ENCODE measurements at regions of chr11 and their contacts with region 1.

Region 1: GRCh38 chr11:130924770-130925169 is 8.5 kb upstream of the SNX19 start:
- DNase-seq: no peak
- H3K4me3 ChIP-seq: no peak overlapping the region
- H3K27ac ChIP-seq: no peak overlapping the region
- H3K4me1 ChIP-seq: no peaks in the 10 kb centered on the region
- H3K27me3 ChIP-seq: no peaks in the 10 kb centered on the region
- CTCF ChIP-seq: no peak

Region 2: GRCh38 chr11:130882138-130882551 is 42.6 kb before region 1 on chr11:
- intact Hi-C with region 1: no loop called
- DNase-seq: no peak
- H3K4me3 ChIP-seq: no peak overlapping the region
- H3K27ac ChIP-seq: no peak overlapping the region
- H3K4me1 ChIP-seq: no peaks in the 10 kb centered on the region
- H3K27me3 ChIP-seq: no peaks in the 10 kb centered on the region
- CTCF ChIP-seq: no peak

Region 3: DNA sequence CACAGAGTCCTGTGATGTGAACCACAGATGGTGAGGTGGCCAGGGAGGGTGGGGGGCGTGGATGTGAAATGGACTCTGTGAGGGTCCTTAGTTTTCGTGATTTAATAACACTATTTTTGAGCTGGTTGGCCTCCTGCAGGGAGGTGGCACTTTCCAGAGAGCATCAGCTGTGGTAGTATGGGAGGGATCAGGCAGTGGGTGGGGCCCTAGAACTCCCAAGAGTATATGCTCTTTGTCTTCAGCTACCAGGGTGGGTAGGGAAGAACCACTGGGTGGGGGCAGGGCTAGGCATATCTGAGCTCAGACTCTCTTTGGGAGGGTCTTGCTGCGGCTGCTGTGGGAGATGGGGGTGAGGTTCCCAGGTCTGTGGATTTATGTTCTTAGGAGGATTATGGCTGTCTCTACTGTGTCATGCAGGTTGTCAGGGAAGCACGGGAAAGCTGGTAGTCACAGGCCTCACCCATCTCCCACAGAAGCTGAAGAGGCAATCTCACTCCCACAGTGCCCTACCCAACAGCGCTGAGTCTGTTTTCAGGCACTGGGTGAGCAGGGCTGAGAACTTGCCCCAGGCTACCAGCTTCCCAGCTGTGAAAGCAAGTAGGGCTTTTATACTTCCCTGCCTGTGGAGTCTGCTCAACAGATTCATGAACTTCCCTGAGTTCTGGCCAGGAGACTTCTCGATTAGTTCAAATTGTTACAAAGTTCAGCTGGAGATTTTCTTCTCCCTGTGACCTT is 39.5 kb after region 1 on chr11:
- intact Hi-C with region 1: no loop called
- DNase-seq: peak in 1 of 5 donors; percentile 29
- H3K4me3 ChIP-seq: no peak overlapping the region
- H3K27ac ChIP-seq: no peak overlapping the region
- H3K4me1 ChIP-seq: no peaks in the 10 kb centered on the region
- H3K27me3 ChIP-seq: no peaks in the 10 kb centered on the region
- CTCF ChIP-seq: no peak

Region 4: GRCh38 chr11:131077340-131077739 is 152.6 kb after region 1 on chr11:
- intact Hi-C with region 1: no loop called
- DNase-seq: no peak
- H3K4me3 ChIP-seq: no peak overlapping the region
- H3K27ac ChIP-seq: no peak overlapping the region
- H3K4me1 ChIP-seq: no peaks in the 10 kb centered on the region
- H3K27me3 ChIP-seq: no peaks in the 10 kb centered on the region
- CTCF ChIP-seq: no peak

Region 5: GRCh38 chr11:131674051-131674755 is 749.4 kb after region 1 on chr11:
- intact Hi-C with region 1: loop called (anchors 10 kb)
- DNase-seq: peak in 4 of 5 donors; percentile 86 to 90 (median 87)
- H3K4me3 ChIP-seq: no peak overlapping the region
- H3K27ac ChIP-seq: no peak overlapping the region
- H3K4me1 ChIP-seq: no peaks in the 10 kb centered on the region
- H3K27me3 ChIP-seq: no peaks in the 10 kb centered on the region
- CTCF ChIP-seq: peak; percentile 86